ENCODE measurements at regions of chr16 and their contacts with region 1.

Region 1: GRCh38 chr16:73047518-73048291 is at the start of gene ZFHX3:
- DNase-seq: peak; percentile 59 to 75
- H3K4me3 ChIP-seq: peak within 1 kb of the TSS; percentile 89
- H3K27ac ChIP-seq: peak within 1 kb of the TSS; percentile 97
- H3K4me1 ChIP-seq: peaks cover 67% of the 10 kb centered on the region
- H3K27me3 ChIP-seq: no peaks in the 10 kb centered on the region
- CTCF ChIP-seq: no peak
- total RNA-seq, gene ZFHX3: 20.5 and 23.1 TPM in 2 replicates

Region 2: DNA sequence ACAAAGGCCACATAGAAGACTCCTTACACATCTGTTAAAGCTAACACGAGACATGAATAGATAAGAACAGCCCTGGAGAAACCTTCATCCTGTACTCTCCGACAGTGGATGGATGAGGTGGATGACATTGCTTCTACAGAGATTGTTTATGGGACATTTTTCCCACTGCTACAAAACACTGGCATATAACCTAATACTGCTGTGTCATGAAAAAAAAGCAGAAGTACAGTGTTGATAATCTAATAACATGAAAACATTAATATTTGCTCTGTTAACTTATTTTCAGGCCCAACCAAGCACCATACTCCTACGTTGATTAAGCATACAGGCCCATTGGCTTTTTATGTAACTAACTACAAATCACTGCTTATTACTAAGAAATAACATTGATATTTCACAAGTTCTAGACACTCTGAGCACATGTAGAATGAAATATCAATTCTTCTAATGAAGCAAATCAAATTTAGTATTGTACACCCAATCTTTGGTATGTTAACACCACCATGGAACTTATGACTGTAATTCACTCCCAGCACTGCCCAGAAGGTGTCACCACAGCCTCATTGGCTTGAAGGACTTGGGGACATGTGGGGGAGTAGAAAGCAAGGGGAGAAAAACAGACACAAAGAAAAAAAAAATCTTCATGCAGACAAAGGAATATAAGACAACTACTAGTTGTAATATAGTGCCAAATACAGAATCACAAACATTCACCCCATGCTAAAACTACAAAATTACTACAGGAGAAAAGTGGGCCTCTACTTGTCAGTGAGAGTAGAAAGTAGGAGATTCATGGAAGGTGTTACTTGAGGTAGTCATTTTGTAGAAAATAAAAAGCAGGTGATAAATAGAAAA is 545.7 kb before region 1 on chr16:
- CTCF ChIA-PET with region 1: no interaction called
- POLR2A ChIA-PET with region 1: no interaction called
- intact Hi-C with region 1: loop called (anchors 5 kb)
- DNase-seq: peak in 1 of 2 experiments; percentile 41
- H3K4me3 ChIP-seq: no peak overlapping the region
- H3K27ac ChIP-seq: no peak overlapping the region
- H3K4me1 ChIP-seq: no peaks in the 10 kb centered on the region
- H3K27me3 ChIP-seq: no peaks in the 10 kb centered on the region
- CTCF ChIP-seq: peak; percentile 85

Region 3: GRCh38 chr16:72832621-72833248 is 215.0 kb before region 1 on chr16:
- CTCF ChIA-PET with region 1: no interaction called
- POLR2A ChIA-PET with region 1: no interaction called
- intact Hi-C with region 1: loop called (anchors 2 kb)
- DNase-seq: peak; percentile 40 to 83
- H3K4me3 ChIP-seq: no peak overlapping the region
- H3K27ac ChIP-seq: no peak overlapping the region
- H3K4me1 ChIP-seq: 0 out of 2 replicates have a peak, but pooled peaks cover 5% of the 10 kb centered on the region
- H3K27me3 ChIP-seq: no peaks in the 10 kb centered on the region
- CTCF ChIP-seq: peak; percentile 99

Region 4: DNA sequence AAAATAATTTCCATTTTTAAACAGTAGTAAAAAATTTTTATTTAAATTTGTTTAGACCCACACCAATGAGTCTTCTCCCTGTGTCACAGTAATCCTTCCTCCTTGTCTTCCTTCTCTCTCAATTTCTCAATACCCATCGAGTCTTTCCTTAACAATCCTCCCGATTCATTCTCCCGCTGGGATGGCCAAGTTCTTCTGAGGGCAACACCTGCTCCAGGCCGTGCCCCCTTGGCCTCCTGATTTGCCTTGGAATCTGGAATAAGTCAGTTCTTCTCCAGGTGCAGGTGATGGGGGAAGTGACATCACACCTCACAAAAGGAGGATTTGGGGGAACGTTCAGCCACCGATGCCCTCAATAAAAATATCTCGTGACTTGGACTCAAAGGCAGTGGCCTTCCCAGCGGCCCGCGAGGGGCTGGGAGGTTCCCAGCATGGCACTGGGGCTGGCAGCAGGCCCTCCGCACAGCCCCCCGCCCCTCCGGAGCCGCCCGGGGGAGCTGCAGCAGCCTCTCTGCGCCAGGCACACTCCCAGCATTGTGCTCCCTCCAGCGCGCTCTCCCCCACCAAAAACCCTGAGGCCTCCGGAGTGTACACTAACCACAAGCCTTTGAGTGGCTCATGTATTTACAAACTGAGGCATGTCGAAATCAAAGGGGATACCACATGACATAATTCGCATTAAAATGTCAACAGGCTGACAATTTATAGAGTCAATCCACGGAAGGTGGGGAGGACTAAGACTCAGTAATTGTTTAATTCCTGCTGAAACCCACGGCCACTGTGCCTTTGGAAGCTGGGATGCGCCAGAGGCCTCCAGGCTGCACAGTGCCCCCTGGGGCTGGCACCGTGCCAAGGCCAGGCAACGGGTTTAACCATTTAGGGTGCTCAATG is 120.3 kb before region 1 on chr16:
- CTCF ChIA-PET with region 1: no interaction called
- POLR2A ChIA-PET with region 1: no interaction called
- intact Hi-C with region 1: loop called (anchors 5 kb)
- DNase-seq: peak; percentile 77 to 97
- H3K4me3 ChIP-seq: peak overlapping the region; percentile 53; the same call in 1 of the 2 replicates
- H3K27ac ChIP-seq: peak overlapping the region; percentile 78
- H3K4me1 ChIP-seq: peaks cover 35% of the 10 kb centered on the region
- H3K27me3 ChIP-seq: no peaks in the 10 kb centered on the region
- CTCF ChIP-seq: no peak

Region 5: DNA sequence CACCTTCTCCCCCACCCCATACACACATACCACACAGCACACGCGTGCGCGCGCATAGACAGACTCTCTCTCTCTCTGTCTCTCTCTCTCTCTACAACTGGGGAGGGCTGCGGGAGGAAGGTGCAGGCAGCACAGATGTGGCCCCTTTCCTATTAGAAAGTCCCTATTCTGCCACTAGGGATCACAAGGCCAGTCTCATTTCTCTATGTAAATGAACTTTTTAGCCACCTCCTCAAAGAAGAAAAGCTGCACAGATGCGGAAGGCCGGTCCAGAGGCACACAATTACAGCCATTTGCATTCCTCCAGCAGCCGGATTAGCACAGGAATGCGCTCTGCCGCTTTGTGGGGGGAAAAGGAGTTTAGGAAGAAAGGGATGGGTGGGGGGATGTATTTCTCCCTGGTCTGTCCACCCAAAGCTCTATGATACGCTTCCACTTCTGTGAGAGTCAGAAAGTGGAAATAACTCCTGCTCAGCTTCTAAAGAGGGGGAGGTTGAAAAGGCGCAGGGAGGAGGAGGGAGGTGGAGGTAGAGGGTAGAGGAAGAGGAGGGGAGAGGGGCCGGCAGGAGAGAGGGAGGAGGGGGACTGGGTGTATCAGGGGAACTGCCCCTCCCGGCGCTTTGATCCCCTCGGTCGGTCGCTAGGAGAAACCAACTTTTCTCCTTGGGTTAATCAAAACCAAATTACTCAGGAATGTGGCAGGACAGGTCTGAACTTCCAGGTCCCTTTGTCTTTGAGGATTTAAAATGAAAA is 11.5 kb before region 1 on chr16:
- CTCF ChIA-PET with region 1: no interaction called
- POLR2A ChIA-PET with region 1: interaction called, 10 read pairs
- intact Hi-C with region 1: no loop called
- DNase-seq: peak; percentile 49 to 81
- H3K4me3 ChIP-seq: peak overlapping the region; percentile 36; the same call in 1 of the 2 replicates
- H3K27ac ChIP-seq: peak overlapping the region; percentile 57
- H3K4me1 ChIP-seq: peaks cover 50% of the 10 kb centered on the region
- H3K27me3 ChIP-seq: no peaks in the 10 kb centered on the region
- CTCF ChIP-seq: no peak

Region 6: GRCh38 chr16:73196670-73197069 is 149.0 kb after region 1 on chr16:
- CTCF ChIA-PET with region 1: no interaction called
- POLR2A ChIA-PET with region 1: no interaction called
- intact Hi-C with region 1: loop called (anchors 2 kb)
- DNase-seq: peak; percentile 38 to 49
- H3K4me3 ChIP-seq: no peak overlapping the region
- H3K27ac ChIP-seq: no peak overlapping the region
- H3K4me1 ChIP-seq: no peaks in the 10 kb centered on the region
- H3K27me3 ChIP-seq: peaks cover 2% of the 10 kb centered on the region; the same call in 1 of the 2 replicates
- CTCF ChIP-seq: peak; percentile 70

Measured in PC-9 (cell line).